ENCODE measurements at regions of chr7 and their contacts with region 1.

Region 1: DNA sequence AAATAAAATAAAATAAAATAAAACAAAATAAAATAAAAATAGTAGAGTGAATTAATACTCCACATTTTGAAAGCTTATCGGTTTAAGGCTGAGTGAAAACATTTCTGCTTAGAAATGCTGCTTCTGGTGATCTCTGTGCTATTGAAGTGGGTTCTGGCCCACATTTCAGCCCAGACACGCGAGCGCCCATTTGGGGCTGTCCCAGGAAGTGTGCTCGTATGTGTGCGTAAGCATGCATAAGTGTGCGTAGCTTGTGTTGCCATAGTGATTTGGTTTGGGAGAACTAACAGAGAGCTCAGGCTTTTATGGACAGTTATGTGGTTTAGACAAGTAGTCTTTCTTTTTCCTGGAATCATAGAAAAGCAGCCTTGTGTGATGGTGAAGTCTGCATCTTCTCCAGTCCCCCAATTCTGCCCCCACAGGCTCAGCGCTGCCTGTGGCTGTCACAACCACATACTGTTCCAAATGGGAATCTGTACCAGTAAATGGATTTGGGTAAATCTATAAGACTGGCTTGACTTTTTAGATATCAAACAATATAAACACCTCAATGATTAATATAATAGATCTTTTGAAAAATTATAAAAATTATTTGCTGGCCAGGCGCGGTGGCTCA is 29.8 kb upstream of the PURB start:
- DNase-seq: peak; percentile 53
- ATAC-seq: peak; percentile 95
- H3K4me3 Mint-ChIP-seq: peak overlapping the region; percentile 41
- H3K27ac Mint-ChIP-seq: peak overlapping the region; percentile 78
- H3K4me1 Mint-ChIP-seq: peaks cover 11% of the 10 kb centered on the region
- H3K27me3 Mint-ChIP-seq: no peaks in the 10 kb centered on the region
- CTCF ChIP-seq: no peak

Region 2: DNA sequence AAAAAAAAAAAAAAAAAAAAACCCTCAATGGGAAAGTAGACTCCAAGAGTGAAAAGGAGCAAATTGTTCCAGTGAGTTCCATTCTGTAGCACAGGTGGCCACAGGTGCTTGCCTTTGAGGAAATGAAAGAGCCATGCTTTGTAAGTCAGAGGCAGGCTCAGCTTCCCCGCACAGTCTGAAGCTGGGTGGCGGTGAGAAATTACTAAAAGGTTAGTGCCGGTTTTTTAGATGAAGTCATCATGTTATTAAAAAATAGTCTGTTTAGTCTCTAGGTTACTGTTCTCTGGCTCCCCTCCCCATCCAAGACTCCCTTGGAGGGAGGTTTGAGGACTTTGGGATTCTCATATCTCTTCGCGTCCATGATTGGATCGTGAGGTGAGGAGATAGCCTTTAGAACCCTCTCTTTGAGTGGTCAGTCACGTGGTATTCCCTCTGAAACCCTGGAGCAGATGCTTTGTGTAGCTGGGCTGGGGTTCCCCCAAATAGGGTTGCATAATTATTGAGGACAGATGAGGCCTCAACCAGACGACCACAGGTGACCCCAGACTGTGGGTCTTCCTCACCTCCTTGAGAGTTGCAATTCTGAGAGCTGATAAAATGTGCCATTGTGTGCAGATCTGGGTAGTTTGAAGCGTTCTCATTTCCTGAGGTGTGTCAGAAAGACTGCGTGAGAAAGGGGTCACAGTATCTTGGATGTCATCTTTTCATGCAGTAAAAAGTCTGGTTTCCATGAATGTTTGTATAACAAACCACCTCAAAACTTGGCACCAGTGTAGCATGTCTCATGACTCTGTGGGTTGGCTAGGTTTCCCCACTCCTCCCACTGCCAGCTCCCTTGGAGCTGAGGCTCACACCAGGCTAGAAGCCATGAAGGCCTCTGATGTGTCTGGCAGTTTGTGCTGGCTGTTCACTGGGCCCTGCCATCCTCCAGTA is 281.6 kb before region 1 on chr7:
- CTCF ChIA-PET with region 1: no interaction called
- POLR2A ChIA-PET with region 1: interaction called, 3 read pairs
- intact Hi-C with region 1: loop called (anchors 1 kb)
- DNase-seq: peak; percentile 32
- ATAC-seq: peak; percentile 67
- H3K4me3 Mint-ChIP-seq: peak overlapping the region; percentile 61
- H3K27ac Mint-ChIP-seq: peak overlapping the region; percentile 96
- H3K4me1 Mint-ChIP-seq: peaks cover 96% of the 10 kb centered on the region
- H3K27me3 Mint-ChIP-seq: no peaks in the 10 kb centered on the region
- CTCF ChIP-seq: no peak

Region 3: DNA sequence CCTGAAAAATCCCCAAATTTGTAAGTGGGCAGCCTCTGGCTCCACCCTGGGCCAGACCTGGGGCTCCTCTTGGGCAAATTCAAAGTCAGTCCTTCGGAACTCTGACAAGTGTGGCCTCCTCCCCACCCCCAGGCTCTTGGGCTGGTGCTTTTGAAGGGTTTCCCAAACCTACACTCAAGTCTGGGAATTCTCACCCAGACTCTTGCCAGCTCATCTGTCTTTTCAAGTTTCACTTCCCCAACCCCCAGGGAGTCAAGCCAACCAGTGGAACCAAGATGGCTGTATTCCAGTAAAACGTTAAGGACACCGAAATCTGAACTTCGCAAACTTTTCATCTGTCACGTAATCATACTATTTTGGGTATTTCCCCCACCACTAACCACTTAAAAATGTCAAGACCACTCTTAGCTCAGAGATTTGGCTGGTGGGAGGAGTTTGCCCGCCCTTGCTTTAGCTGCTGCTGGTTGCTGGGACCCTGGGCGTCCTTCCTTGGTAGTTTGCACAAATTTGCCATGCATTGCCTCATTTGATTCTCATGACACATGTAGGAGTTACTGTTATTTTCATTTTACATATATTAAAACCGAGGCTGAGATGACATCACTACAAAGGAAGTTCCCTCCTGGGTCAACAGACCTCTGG is 65.4 kb after region 1 on chr7:
- CTCF ChIA-PET with region 1: no interaction called
- POLR2A ChIA-PET with region 1: interaction called, 3 read pairs
- intact Hi-C with region 1: loop called (anchors 1 kb)
- DNase-seq: peak; percentile 56
- ATAC-seq: peak; percentile 63
- H3K4me3 Mint-ChIP-seq: peak overlapping the region; percentile 74
- H3K27ac Mint-ChIP-seq: peak overlapping the region; percentile 92
- H3K4me1 Mint-ChIP-seq: peaks cover 86% of the 10 kb centered on the region
- H3K27me3 Mint-ChIP-seq: no peaks in the 10 kb centered on the region
- CTCF ChIP-seq: no peak

Region 4: GRCh38 chr7:44986218-44987053 is 71.3 kb after region 1 on chr7:
- CTCF ChIA-PET with region 1: no interaction called
- POLR2A ChIA-PET with region 1: no interaction called
- intact Hi-C with region 1: loop called (anchors 1 kb)
- DNase-seq: peak; percentile 97
- ATAC-seq: peak; percentile 92
- H3K4me3 Mint-ChIP-seq: peak overlapping the region; percentile 98
- H3K27ac Mint-ChIP-seq: peak overlapping the region; percentile 98
- H3K4me1 Mint-ChIP-seq: peaks cover 58% of the 10 kb centered on the region
- H3K27me3 Mint-ChIP-seq: no peaks in the 10 kb centered on the region
- CTCF ChIP-seq: no peak

Measured in activated B cell treated with CpG ODN at 0.5 μM for 24 hours (primary cell).